Ovary (tissue), 10 donors: ENCODE measurements at regions of chr20 and their contacts with region 1.

Region 1: GRCh38 chr20:35146920-35147574 is at the start of gene EDEM2:
- DNase-seq: peak; percentile 91 to 96 (median 94)
- H3K4me3 ChIP-seq: peak within 1 kb of the TSS; percentile 70
- H3K27ac ChIP-seq: peak within 1 kb of the TSS; percentile 0 to 22
- H3K4me1 ChIP-seq: peaks cover 5% of the 10 kb centered on the region
- H3K27me3 ChIP-seq: no peaks in the 10 kb centered on the region
- CTCF ChIP-seq: no peak
- EP300 ChIP-seq: no peak
- POLR2A ChIP-seq: peak; percentile 41
- total RNA-seq, gene EDEM2: 6.4 to 14.9 (median 13.4) TPM

Region 2: DNA sequence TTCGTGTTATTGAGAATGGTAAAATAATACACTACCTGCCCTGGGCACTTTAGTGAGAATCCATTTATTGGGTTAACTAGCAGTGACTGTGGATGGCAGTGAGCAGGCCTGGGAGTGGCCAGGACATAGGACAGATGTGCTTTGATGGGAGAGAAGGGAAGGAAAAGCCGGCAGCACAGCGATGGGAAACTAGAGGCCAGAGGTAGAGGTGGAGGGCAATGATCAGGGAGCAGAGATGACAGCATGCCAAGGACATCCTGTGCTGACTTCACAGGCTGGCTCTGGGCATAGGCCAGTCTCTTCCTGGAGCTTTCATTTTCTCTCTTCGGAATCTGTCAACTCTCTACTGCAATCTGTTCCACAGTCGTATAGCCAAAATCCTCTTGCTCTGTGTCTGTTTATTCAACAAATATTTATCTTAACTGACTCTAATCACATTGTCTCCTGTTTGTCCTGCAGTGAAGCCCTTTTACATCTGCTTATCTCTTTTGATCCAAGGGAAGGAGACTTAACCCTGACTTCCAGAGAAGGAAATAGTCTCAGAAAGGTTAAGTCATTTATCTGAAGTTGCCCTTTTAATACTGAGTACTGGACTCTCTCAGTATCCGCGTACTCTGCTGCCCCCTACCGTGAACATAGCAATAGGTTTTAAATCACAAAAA is 61.0 kb after region 1 on chr20:
- intact Hi-C with region 1: loop called in 3 of 4 experiments (anchors 5 to 10 kb)
- DNase-seq: peak; percentile 77 to 90 (median 79)
- H3K4me3 ChIP-seq: no peak overlapping the region
- H3K27ac ChIP-seq: peak overlapping the region in 1 of 2 donors; percentile 4
- H3K4me1 ChIP-seq: no peaks in the 10 kb centered on the region
- H3K27me3 ChIP-seq: no peaks in the 10 kb centered on the region
- CTCF ChIP-seq: peak; percentile 78 to 92 (median 86)
- EP300 ChIP-seq: no peak
- POLR2A ChIP-seq: no peak

Region 3: DNA sequence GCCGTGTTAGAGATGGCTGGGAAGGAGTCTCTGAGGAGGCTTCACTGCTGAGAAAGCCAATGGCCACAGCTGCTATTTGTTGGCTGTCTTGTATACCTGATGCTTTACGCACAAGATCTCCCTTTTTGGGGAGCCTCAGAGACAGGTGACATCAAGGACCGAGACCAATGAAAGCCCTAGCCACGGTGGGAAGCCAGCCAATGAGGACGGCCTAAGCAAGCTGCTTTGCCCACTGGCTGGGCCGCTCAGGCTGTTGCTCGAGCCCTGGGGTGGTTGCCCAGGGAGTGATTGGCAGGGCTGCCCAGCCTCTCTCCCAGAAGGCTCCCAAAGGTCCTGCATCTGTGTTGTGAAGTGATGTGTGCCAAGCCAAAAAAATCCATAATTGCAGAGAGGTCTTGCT is 126.4 kb after region 1 on chr20:
- intact Hi-C with region 1: loop called in 1 of 4 experiments (anchors 5 kb)
- DNase-seq: no peak
- H3K4me3 ChIP-seq: no peak overlapping the region
- H3K27ac ChIP-seq: no peak overlapping the region
- H3K4me1 ChIP-seq: peaks cover 10% of the 10 kb centered on the region
- H3K27me3 ChIP-seq: no peaks in the 10 kb centered on the region
- CTCF ChIP-seq: no peak
- EP300 ChIP-seq: no peak
- POLR2A ChIP-seq: no peak